CD14-positive monocyte (primary cell): ENCODE measurements at regions of chr17 and their contacts with region 1.

Region 1: GRCh38 chr17:40062329-40063186 is at the start of gene THRA:
- DNase-seq: peak in 2 of 3 donors; percentile 54
- H3K4me3 ChIP-seq: peak within 1 kb of the TSS; percentile 76 to 94 (median 93)
- H3K4me3 Mint-ChIP-seq: peak within 1 kb of the TSS; percentile 84 to 90
- H3K27ac ChIP-seq: peak within 1 kb of the TSS; percentile 69 to 84
- H3K27ac Mint-ChIP-seq: peak within 1 kb of the TSS; percentile 77 to 92 (median 88)
- H3K4me1 ChIP-seq: peaks cover 26 to 45% of the 10 kb centered on the region in 2 donors
- H3K4me1 Mint-ChIP-seq: peaks cover 49% of the 10 kb centered on the region
- H3K27me3 ChIP-seq: peaks cover 0 to 4% of the 10 kb centered on the region in 2 donors
- H3K27me3 Mint-ChIP-seq: peaks cover 8 to 10% (median 9%) of the 10 kb centered on the region in 3 donors
- CTCF ChIP-seq: peak; percentile 11
- polyA plus RNA-seq, gene THRA: 2.5 to 7.5 (median 3.8) TPM

Region 2: DNA sequence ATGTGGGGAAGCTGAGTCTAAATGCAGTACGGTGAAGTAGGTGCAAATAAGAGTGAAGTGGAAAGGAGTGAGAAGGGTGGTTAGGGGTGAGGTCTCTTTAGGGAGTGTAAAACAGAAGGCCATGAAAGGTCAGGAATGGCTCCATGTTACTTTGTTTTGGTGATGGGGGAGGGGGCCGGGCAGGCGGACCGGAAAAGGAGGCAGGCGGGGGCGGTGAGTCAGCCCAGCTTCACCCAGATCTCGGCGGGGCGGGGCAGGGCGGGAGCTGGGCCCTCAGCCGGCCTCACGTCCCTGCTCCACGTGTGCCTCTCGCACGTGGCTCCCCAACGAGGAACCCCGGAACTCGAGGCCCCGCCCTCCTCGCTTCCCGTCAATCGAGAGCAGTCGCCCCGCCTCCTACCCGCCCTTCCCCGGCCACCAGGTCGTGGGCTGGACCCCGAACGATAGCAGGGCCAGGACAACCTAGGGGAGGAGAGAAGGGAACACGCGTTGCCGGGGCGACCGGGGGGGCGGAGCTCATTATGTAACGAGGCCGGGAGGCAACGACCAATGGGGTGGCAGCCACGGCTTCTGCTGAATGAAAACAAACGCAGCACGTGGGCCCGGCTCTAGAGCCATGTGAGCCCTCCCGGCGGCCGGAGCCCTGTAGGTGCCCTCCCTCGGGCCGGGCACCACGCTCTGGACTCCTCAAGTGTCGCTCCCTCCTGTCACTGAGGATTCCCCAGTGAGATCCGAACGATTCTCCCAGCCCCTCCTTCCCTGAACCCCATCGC is 36.5 kb after region 1 on chr17:
- intact Hi-C with region 1: loop called (anchors 5 kb)
- DNase-seq: peak; percentile 99 to 100 (median 100)
- H3K4me3 ChIP-seq: peak overlapping the region; percentile 35 to 78 (median 36)
- H3K4me3 Mint-ChIP-seq: peak overlapping the region; percentile 87 to 95
- H3K27ac ChIP-seq: peak overlapping the region; percentile 78 to 98
- H3K27ac Mint-ChIP-seq: peak overlapping the region; percentile 96 to 99 (median 98)
- H3K4me1 ChIP-seq: peaks cover 68 to 70% of the 10 kb centered on the region in 2 donors
- H3K4me1 Mint-ChIP-seq: peaks cover 79% of the 10 kb centered on the region
- H3K27me3 ChIP-seq: no peaks in the 10 kb centered on the region
- H3K27me3 Mint-ChIP-seq: peaks cover 0 to 5% (median 0%) of the 10 kb centered on the region in 3 donors
- CTCF ChIP-seq: no peak